ENCODE measurements at regions of chr9 and their contacts with region 1.

Region 1: DNA sequence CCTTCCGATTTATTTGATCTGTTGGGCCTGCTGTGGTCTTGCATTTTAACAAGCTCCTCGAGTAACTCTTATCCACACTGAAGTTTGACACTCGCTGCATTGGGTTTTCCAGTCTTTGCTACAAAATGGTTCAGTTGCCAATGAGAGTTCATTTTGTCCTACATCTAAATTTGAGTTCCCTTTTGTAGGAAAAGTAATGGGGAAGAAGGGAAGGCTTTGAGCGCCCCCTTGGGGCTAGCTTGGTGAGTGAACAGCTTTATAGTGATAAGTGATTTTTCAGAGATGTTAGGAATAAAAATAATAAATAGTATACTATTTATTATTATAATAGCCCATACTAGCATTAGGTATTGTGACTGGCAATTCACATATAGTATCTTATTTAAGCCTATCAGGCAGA is 89.9 kb upstream of the GNAQ start:
- DNase-seq: no peak
- H3K4me3 Mint-ChIP-seq: no peak overlapping the region
- H3K27ac Mint-ChIP-seq: no peak overlapping the region
- H3K4me1 Mint-ChIP-seq: peaks cover 31% of the 10 kb centered on the region
- H3K27me3 Mint-ChIP-seq: no peaks in the 10 kb centered on the region

Region 2: GRCh38 chr9:77177161-77177893 is 944.2 kb before region 1 on chr9 and contains the start of gene VPS13A:
- intact Hi-C with region 1: loop called (anchors 2 kb)
- DNase-seq: peak; percentile 88
- H3K4me3 Mint-ChIP-seq: peak within 1 kb of the TSS; percentile 95
- H3K27ac Mint-ChIP-seq: peak within 1 kb of the TSS; percentile 92
- H3K4me1 Mint-ChIP-seq: peaks cover 32% of the 10 kb centered on the region
- H3K27me3 Mint-ChIP-seq: peaks cover 13% of the 10 kb centered on the region
- total RNA-seq, gene VPS13A: 43.7 and 44.2 TPM in 2 replicates

Region 3: DNA sequence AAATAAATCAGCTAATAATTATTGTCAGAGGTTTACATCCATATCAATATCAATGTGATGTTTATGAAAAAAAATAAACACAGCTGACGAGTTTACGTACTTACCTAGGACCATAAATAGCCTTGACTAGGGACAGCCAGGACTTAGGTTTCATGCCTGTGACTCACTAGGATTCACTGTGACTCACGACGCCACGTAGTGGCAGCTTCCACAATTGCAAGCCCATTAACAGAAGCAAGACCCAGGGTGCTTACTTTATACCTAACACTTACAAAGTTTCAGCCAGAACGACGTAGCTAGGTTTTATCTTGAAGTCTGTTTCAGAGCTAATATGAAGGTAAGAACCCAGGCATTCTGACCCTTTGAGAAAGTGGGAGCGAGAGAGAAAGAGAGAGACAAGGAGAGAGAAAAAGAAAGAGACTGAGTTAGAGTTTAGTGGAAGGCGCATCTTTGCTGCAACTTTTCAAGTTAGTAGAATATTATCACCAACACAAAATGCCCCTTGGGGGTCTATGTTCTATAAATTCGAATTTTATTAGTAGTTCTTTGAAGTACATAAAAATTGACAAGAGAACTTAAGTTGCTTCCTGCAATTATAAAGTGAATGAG is 664.6 kb before region 1 on chr9:
- intact Hi-C with region 1: loop called (anchors 5 kb)
- DNase-seq: peak; percentile 71
- H3K4me3 Mint-ChIP-seq: no peak overlapping the region
- H3K27ac Mint-ChIP-seq: no peak overlapping the region
- H3K4me1 Mint-ChIP-seq: peaks cover 25% of the 10 kb centered on the region
- H3K27me3 Mint-ChIP-seq: peaks cover 4% of the 10 kb centered on the region

Region 4: GRCh38 chr9:77725820-77726219 is 395.7 kb before region 1 on chr9:
- intact Hi-C with region 1: loop called (anchors 5 kb)
- DNase-seq: peak; percentile 8
- H3K4me3 Mint-ChIP-seq: peak overlapping the region; percentile 37
- H3K27ac Mint-ChIP-seq: peak overlapping the region; percentile 92
- H3K4me1 Mint-ChIP-seq: peaks cover 41% of the 10 kb centered on the region
- H3K27me3 Mint-ChIP-seq: no peaks in the 10 kb centered on the region

Region 5: DNA sequence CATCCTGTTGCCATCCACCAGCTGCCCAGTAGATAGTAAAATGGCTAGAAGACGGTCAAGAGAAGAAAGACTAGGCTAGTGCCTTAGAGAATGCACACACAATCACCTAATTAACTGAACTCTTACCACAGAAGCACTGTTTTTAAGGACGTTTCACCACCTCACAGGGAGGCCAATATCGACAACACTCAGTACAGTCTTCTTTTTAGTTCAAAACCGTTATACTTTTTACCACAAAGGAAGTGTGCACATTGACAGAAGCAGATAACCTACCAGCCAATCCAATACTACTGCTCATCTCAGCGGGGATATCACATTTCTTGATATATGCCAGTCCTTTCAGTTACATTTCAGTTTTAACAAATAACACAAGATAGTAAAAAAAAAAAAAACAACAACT is 212.2 kb before region 1 on chr9:
- intact Hi-C with region 1: loop called (anchors 5 kb)
- DNase-seq: peak; percentile 26
- H3K4me3 Mint-ChIP-seq: peak overlapping the region; percentile 72
- H3K27ac Mint-ChIP-seq: peak overlapping the region; percentile 94
- H3K4me1 Mint-ChIP-seq: peaks cover 53% of the 10 kb centered on the region
- H3K27me3 Mint-ChIP-seq: no peaks in the 10 kb centered on the region

Region 6: DNA sequence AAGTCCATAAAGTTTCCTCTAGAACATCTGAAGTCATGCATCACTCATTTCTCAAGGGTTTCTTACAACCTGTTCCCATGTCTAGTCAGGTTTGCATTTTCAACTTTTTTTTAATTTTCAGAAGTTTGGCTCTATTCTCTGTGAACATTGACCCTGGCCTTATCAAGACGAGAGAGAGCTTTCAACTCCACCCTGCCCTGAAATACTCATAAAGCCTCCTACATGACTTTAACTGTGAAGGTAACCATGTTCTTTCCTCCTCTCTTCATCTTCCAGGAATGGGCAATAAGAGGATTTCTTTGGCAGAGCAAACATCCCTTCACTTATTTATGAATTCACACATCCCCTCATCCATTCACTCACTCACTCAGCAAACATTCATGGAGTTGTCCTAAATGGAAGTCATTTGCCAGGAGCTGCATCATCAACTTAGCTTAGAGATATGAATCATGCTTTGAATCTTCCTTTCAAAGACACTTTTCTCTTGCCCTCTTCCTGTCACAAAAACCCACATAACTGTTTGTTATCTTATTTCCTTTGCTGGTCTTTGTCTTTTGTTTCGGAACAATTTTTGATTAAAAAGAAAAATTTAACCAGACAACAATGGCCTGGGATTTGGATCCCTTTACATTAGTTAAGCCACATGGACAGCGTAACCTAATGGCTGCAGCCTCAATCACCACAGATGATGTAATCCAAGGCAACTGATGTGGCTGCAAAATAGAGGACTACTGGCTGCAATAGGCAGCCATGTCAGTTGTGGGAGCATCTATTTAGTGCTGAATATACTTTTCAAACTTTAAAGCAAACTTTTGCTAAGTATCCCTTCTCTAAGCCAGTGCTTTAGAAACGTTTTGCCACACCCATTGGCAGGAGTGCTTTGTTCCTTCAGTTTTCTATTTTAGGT is 46.9 kb before region 1 on chr9:
- intact Hi-C with region 1: loop called (anchors 2 kb)
- DNase-seq: no peak
- H3K4me3 Mint-ChIP-seq: peak overlapping the region; percentile 43
- H3K27ac Mint-ChIP-seq: peak overlapping the region; percentile 82
- H3K4me1 Mint-ChIP-seq: peaks cover 47% of the 10 kb centered on the region
- H3K27me3 Mint-ChIP-seq: no peaks in the 10 kb centered on the region

Region 7: DNA sequence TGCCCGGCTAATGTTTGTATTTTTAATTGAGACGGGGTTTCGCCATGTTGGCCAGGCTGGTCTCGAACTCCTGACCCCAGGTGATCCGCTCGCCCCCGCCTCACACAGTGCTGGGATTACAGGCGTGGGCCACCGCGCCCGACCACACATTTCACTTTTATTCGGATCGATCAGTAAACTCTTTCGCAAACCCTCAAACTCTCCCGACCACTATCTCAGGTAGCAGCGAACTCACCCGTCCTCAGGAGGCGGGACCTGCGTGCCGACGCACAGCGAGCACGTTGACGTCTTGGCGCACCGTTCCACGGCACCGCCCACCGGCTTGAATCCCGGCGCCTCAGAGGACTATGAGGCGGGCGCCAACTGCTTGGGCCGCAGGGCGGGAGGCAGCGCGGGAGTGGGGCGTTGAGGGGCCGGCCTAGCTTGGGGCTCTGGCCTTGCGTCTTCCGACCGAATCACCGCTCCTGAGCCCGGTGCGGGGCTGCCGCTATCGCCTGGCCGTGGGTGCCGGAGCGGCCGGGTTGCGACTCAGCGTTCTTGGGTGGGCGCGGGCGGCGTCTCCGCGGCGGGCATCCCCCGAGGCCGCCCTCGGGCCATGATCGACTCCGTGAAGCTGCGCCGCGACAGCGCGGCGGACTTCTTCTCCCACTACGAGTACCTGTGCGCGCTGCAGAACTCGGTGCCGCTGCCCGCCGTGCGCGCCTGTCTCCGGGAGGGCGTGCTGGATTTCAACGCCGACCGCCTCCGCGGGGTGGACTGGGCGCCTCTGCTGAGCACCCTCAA is 114.5 kb after region 1 on chr9 and contains the start of gene CEP78:
- intact Hi-C with region 1: loop called (anchors 1 kb)
- DNase-seq: peak; percentile 85
- H3K4me3 Mint-ChIP-seq: no peak within 1 kb of the TSS
- H3K27ac Mint-ChIP-seq: peak within 1 kb of the TSS; percentile 92
- H3K4me1 Mint-ChIP-seq: peaks cover 31% of the 10 kb centered on the region
- H3K27me3 Mint-ChIP-seq: no peaks in the 10 kb centered on the region
- total RNA-seq, gene CEP78: 35.2 and 41.1 TPM in 2 replicates

Region 8: DNA sequence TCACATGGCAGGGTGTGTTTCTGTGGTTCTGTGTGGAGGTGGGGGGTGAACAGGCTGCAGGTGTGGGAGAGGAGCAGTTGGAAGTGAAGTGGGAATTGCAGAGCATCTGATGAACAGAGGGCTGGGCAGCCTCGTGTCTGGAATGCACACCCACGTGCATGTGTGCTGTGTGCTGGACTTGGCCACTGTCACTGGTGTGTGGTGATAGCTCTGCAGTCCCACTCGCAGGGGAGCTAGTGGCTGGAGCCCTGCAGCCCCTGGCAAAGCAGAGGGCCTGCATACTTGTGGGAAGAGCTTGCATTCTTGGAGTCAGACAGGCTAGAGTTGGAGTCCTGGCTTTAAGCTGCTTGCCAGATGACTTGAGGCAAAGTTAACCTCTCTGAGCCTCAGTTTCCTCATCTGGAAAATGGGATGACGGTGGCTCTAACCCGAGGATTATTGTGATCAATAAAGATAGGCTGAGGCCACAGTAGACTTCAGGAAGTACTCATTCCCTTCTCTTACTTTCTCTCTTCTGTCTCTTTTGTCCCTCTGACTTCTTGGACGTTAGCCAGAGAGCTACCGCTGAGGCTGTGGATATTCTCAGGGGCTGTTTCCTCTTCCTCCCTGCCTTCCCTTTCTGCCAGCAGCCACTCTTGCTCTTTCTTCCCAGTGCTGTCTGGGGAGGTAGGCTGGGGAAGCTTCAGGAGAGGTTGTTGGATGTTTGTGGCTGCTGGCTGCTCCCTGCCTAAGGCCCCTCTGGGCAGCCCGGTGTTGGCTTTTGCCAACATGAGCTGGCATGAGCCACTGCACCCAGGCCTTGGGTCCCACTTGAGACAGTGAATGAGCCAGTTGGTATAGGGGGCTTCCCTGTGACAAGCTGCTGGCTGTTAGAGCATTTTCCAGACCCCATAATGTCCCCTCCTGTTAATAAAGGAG is 193.7 kb after region 1 on chr9:
- intact Hi-C with region 1: no loop called
- DNase-seq: no peak
- H3K4me3 Mint-ChIP-seq: no peak overlapping the region
- H3K27ac Mint-ChIP-seq: no peak overlapping the region
- H3K4me1 Mint-ChIP-seq: no peaks in the 10 kb centered on the region
- H3K27me3 Mint-ChIP-seq: no peaks in the 10 kb centered on the region

Region 9: DNA sequence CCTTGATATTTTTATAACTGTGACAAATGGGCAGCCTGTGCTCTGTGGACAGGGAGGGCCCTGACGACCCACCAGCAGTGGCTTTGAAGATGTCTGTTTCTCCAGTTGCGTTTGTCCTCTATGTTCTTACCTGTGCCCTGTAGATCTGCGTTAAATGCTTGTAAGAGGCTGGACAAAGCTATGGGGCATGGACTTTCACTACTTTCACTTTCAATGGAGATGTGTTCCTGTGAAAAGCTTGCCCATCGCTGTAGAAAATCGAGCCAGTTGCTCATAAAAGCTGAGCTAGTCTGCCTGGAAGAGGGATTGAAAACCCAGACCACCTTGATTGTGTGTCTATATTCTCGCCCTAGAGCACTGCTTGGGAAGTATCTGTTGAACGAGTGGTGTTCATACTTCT is 249.5 kb after region 1 on chr9:
- intact Hi-C with region 1: no loop called
- DNase-seq: no peak
- H3K4me3 Mint-ChIP-seq: no peak overlapping the region
- H3K27ac Mint-ChIP-seq: no peak overlapping the region
- H3K4me1 Mint-ChIP-seq: peaks cover 11% of the 10 kb centered on the region
- H3K27me3 Mint-ChIP-seq: peaks cover 8% of the 10 kb centered on the region